ENCODE measurements at regions of chr18 and their contacts with region 1.

Region 1: GRCh38 chr18:68660354-68661183 is 54.3 kb downstream of the TMX3 start:
- DNase-seq: no peak
- ATAC-seq: no peak

Region 2: DNA sequence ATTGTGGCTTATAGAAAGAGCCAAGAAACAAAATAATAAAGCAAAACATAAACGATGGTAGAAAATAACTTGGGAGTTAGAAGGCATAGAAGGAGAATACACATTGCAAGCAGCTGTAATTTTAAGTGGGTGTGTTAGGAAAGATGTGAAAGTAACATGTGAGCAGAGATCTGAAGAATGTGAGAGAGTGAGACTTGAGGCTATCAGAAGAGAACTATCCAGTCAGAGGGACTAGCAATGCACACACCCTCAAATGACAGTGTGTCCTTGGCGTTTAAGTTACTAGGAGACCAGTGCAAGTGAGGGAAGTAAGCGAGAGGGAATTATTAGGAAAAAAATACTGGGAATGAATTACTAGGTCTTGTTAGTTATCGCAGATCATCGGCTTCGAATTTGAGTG is 1448.9 kb before region 1 on chr18:
- intact Hi-C with region 1: loop called in 1 of 2 experiments (anchors 5 kb)
- DNase-seq: no peak
- ATAC-seq: no peak

Measured in left cardiac atrium (tissue), 4 donors.